ENCODE measurements at regions of chr1 and their contacts with region 1.

Region 1: DNA sequence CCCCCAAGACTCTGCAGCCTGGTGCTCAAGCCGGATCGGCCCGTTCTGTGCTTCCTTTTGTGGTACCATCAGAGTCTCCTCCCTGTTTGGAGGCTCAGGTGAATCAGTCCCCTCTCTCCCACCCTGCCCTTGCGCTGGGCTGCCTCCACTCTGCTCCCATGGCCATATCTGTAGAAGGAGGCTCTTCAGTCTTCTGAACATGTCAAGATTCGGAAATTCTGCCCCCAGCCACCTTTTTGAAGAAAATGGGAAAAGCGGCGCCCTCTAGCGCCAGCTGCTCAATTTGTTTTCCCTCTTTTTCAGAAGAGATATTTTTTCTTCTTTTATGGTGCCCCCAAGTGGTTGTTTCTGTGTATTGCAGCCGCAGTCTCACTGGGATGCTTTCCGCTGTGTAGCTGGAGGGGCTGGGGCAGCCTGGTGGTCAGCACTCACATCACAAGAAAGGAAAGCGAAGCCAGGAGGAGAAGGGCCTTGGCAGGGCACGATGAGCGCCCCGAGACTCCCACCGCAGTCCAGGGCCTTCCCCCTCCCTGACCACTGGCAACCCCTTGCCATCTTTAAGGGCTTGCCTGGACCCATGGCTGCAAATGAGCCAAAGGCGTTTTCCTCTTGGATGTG is 58.4 kb upstream of the CACNA1E start:
- DNase-seq: peak; percentile 45 to 82 (median 76)
- ATAC-seq: peak; percentile 86
- H3K4me3 ChIP-seq: peak overlapping the region; percentile 26
- H3K4me3 Mint-ChIP-seq: peak overlapping the region; percentile 59 to 86 (median 74)
- H3K27ac ChIP-seq: no peak overlapping the region
- H3K27ac Mint-ChIP-seq: peak overlapping the region in 8 of 9 donors; percentile 16 to 86 (median 58)
- H3K4me1 ChIP-seq: peaks cover 3 to 16% of the 10 kb centered on the region in 2 donors
- H3K4me1 Mint-ChIP-seq: peaks cover 0 to 12% (median 10%) of the 10 kb centered on the region in 7 donors
- H3K27me3 ChIP-seq: no peaks in the 10 kb centered on the region
- H3K27me3 Mint-ChIP-seq: peaks cover 17 to 29% (median 22%) of the 10 kb centered on the region in 5 donors

Region 2: GRCh38 chr1:180515864-180516388 is 909.0 kb before region 1 on chr1:
- CTCF ChIA-PET with region 1: interaction called, 3 read pairs
- POLR2A ChIA-PET with region 1: no interaction called
- intact Hi-C with region 1: loop called (anchors 1 to 5 kb)
- DNase-seq: peak in 8 of 9 donors; percentile 33 to 65 (median 53)
- ATAC-seq: peak; percentile 94
- H3K4me3 ChIP-seq: no peak overlapping the region
- H3K4me3 Mint-ChIP-seq: no peak overlapping the region
- H3K27ac ChIP-seq: no peak overlapping the region
- H3K27ac Mint-ChIP-seq: no peak overlapping the region
- H3K4me1 ChIP-seq: no peaks in the 10 kb centered on the region
- H3K4me1 Mint-ChIP-seq: peaks cover 0 to 3% (median 0%) of the 10 kb centered on the region in 7 donors
- H3K27me3 ChIP-seq: no peaks in the 10 kb centered on the region
- H3K27me3 Mint-ChIP-seq: peaks cover 0 to 13% (median 10%) of the 10 kb centered on the region in 5 donors

Region 3: DNA sequence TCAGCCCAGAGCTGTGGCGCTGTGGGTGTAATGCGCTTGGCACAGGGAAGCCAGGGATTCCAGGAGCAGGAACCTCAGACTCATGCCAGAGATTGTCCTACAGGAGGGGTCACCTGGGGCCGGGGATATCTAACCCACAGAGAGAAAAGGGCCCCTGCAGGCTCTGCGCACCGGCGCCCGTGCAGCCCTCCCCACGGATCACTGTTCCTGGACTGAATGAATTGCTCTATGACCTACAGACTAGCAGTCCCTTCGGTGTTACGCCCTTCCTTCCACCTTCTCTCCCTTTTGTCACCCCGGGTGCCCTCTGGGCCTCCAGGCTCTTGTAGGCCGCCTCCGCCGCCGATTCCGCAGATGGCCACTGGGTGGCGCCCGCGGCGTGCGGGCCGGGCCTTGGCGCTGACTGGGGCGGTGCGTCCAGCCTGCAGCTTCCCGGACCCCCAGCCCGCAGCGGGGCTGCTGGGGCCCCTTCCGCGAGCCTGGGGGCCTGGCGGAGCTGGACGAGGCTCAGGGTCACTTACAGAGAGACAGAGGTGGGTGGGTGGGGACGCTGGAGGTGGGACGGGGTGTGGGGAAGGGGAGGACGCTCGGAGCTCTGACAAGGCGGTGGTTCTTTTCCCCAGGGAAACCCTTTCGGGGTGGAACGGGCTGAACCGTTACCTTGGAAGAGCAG is 235.1 kb before region 1 on chr1:
- CTCF ChIA-PET with region 1: interaction called, 90 read pairs
- POLR2A ChIA-PET with region 1: interaction called, 8 read pairs
- intact Hi-C with region 1: loop called (anchors 1 kb)
- DNase-seq: peak; percentile 49 to 95 (median 79)
- ATAC-seq: peak; percentile 88
- H3K4me3 ChIP-seq: no peak overlapping the region
- H3K4me3 Mint-ChIP-seq: peak overlapping the region in 8 of 10 donors; percentile 22 to 77 (median 55)
- H3K27ac ChIP-seq: no peak overlapping the region
- H3K27ac Mint-ChIP-seq: no peak overlapping the region
- H3K4me1 ChIP-seq: peaks cover 0 to 4% of the 10 kb centered on the region in 2 donors
- H3K4me1 Mint-ChIP-seq: peaks cover 0 to 13% (median 6%) of the 10 kb centered on the region in 7 donors
- H3K27me3 ChIP-seq: no peaks in the 10 kb centered on the region
- H3K27me3 Mint-ChIP-seq: peaks cover 0 to 22% (median 11%) of the 10 kb centered on the region in 5 donors

Region 4: GRCh38 chr1:181318022-181318857 is 106.7 kb before region 1 on chr1:
- CTCF ChIA-PET with region 1: interaction called, 5 read pairs
- POLR2A ChIA-PET with region 1: no interaction called
- intact Hi-C with region 1: loop called in 1 of 2 experiments (anchors 5 kb)
- DNase-seq: peak in 5 of 9 donors; percentile 14 to 28 (median 16)
- ATAC-seq: peak; percentile 49
- H3K4me3 ChIP-seq: peak overlapping the region; percentile 33
- H3K4me3 Mint-ChIP-seq: peak overlapping the region; percentile 56 to 90 (median 84)
- H3K27ac ChIP-seq: no peak overlapping the region
- H3K27ac Mint-ChIP-seq: peak overlapping the region in 2 of 9 donors; percentile 17 to 55
- H3K4me1 ChIP-seq: peaks cover 0 to 10% of the 10 kb centered on the region in 2 donors
- H3K4me1 Mint-ChIP-seq: peaks cover 16 to 40% (median 26%) of the 10 kb centered on the region in 7 donors
- H3K27me3 ChIP-seq: peaks cover 0 to 35% of the 10 kb centered on the region in 2 donors
- H3K27me3 Mint-ChIP-seq: peaks cover 46 to 77% (median 59%) of the 10 kb centered on the region in 5 donors

Region 5: DNA sequence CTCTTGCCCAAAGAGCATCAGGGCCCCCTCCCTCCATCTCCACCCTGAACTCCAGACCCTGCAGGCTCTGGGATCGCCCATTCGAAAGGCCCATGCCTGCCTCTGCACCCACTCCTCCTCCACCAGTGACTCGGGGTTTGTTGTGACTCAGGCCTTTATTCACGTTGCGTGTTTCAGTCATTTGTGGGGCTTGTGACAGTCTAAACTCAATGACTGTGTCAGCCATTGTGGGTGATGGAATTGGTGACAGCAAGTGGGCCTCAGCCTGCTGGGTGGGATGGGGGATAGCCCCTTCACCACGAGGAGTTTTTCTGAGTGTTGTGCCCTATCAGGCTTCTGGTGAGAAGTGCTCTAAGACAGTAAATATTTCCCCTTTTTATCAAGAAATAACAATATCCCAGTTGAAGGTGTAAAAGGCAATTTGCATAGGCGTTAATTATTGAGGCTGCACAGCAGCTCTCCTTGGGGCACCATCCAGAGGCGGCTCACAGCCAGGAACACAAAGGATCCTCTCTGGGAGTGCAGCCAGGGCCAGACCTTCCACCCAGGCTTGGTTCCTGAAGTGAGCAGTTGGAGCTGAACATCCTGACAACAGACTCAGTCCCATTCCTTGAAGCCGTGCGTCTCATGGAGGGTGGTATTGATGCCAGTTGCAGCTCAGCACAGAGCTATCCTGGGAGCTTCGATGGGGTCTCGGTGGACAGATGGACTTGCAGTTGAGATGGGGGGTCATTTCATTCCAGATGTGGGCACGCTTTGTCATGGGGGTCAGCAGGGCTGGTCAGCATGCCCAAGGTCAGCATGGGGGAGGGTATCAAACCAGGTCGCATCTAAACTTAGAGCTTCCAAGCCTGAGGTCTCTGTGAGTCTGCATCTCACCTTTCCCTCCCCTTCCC is 77.2 kb before region 1 on chr1:
- CTCF ChIA-PET with region 1: interaction called, 5 read pairs
- POLR2A ChIA-PET with region 1: no interaction called
- intact Hi-C with region 1: loop called in 1 of 2 experiments (anchors 5 kb)
- DNase-seq: no peak
- ATAC-seq: no peak
- H3K4me3 ChIP-seq: no peak overlapping the region
- H3K4me3 Mint-ChIP-seq: no peak overlapping the region
- H3K27ac ChIP-seq: no peak overlapping the region
- H3K27ac Mint-ChIP-seq: no peak overlapping the region
- H3K4me1 ChIP-seq: peaks cover 0 to 9% of the 10 kb centered on the region in 2 donors
- H3K4me1 Mint-ChIP-seq: peaks cover 0 to 33% (median 21%) of the 10 kb centered on the region in 7 donors
- H3K27me3 ChIP-seq: no peaks in the 10 kb centered on the region
- H3K27me3 Mint-ChIP-seq: peaks cover 0 to 3% (median 0%) of the 10 kb centered on the region in 5 donors

Region 6: DNA sequence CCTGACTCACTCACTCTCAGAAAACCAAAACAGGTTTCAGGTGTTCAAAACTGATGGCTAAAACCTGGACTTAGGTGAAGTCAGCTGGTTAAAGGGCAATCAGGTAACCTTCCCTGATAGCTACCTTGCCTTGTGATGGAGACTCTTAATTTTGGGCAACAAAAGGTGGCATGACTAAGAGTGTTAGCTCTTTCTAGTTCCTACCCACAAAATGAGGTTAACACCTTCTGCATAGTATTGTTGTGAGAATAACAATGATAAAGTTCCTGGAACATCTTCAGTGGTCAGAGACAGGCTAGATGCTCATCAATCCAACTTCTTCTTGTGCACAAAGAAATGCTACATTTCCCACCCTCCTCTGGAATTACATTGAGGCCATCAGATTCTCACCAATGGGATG is 421.8 kb after region 1 on chr1:
- CTCF ChIA-PET with region 1: no interaction called
- POLR2A ChIA-PET with region 1: no interaction called
- intact Hi-C with region 1: no loop called
- DNase-seq: no peak
- ATAC-seq: no peak
- H3K4me3 ChIP-seq: no peak overlapping the region
- H3K4me3 Mint-ChIP-seq: no peak overlapping the region
- H3K27ac ChIP-seq: no peak overlapping the region
- H3K27ac Mint-ChIP-seq: no peak overlapping the region
- H3K4me1 ChIP-seq: no peaks in the 10 kb centered on the region
- H3K4me1 Mint-ChIP-seq: no peaks in the 10 kb centered on the region
- H3K27me3 ChIP-seq: no peaks in the 10 kb centered on the region
- H3K27me3 Mint-ChIP-seq: peaks cover 2 to 50% (median 18%) of the 10 kb centered on the region in 5 donors

Measured in naive thymus-derived CD4-positive, alpha-beta T cell (primary cell).